Activated CD8-positive, alpha-beta T cell treated with anti-CD3 and anti-CD28 coated beads for 36 hours (primary cell): ENCODE measurements at regions of chr3 and their contacts with region 1.

Region 1: DNA sequence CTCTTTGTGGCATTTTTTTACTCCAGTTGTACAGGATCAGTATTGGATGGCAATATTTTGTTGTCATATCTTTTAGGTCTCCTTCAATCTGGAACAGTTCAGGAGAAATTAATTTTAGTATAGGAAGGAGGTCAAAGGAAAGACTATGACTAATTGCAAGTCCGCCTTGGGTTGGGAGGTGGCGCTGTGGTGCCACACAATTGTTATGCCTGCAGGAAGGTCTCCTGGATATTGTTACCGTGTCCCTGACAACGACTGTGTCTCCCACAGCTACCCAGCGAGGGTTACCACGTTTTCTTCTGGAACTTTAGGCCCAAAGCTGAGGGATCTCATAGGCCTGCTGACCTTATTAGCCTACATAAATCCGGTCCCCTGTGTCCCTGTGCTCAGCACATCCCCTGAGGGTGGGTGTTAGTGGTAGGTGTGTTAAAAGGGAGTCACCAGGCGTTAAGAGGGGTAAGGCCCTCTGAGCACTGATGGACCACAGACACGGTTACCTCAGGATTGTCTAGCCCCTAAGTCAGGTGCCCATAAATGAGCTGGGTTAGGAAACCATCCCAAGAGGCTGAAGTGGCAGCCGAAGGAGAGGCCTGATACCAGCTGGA is 31.5 kb downstream of the KCNAB1 start:
- DNase-seq: peak; percentile 79
- ATAC-seq: peak; percentile 66
- H3K4me3 Mint-ChIP-seq: no peak overlapping the region
- H3K27ac Mint-ChIP-seq: no peak overlapping the region
- H3K4me1 Mint-ChIP-seq: peaks cover 7% of the 10 kb centered on the region
- H3K27me3 Mint-ChIP-seq: no peaks in the 10 kb centered on the region
- CTCF ChIP-seq: peak; percentile 84

Region 2: GRCh38 chr3:156005736-156006135 is 146.2 kb before region 1 on chr3:
- CTCF ChIA-PET with region 1: no interaction called
- POLR2A ChIA-PET with region 1: no interaction called
- intact Hi-C with region 1: no loop called
- DNase-seq: no peak
- ATAC-seq: no peak
- H3K4me3 Mint-ChIP-seq: no peak overlapping the region
- H3K27ac Mint-ChIP-seq: no peak overlapping the region
- H3K4me1 Mint-ChIP-seq: no peaks in the 10 kb centered on the region
- H3K27me3 Mint-ChIP-seq: peaks cover 12% of the 10 kb centered on the region
- CTCF ChIP-seq: no peak

Region 3: DNA sequence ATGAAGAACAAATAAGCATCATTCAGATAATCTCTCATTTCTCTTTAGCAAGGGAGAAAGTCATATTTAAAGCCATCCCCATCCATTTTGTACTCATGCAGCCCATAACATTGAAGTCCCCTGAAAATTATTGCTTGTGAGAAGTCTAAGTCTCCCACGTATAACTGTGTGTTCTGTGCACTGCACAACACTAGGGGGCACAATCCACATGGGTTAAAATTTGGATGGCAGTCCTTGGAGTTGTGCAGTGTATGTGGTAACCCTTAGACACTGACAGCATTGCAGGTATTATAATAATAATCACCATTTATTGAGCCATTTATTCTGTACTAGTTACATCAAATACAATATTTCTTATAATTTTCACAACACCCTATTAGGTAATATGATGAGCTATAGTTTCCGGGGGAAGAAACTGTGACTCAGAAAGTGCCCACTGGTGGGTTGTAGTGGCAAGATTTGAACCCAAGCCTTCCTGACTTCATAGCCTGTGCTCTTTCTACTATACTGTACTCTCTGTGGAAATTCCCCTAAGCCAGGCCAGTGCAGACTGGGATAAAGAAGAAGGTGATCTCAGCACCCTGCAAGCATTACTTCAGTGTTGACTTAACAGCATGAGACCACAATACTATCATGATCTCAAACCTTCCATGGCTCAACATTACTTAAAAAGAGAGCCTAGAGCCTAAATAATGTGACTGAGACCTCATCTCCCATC is 15.8 kb before region 1 on chr3:
- CTCF ChIA-PET with region 1: interaction called, 15 read pairs
- POLR2A ChIA-PET with region 1: no interaction called
- intact Hi-C with region 1: no loop called
- DNase-seq: peak; percentile 26
- ATAC-seq: peak; percentile 84
- H3K4me3 Mint-ChIP-seq: no peak overlapping the region
- H3K27ac Mint-ChIP-seq: no peak overlapping the region
- H3K4me1 Mint-ChIP-seq: peaks cover 6% of the 10 kb centered on the region
- H3K27me3 Mint-ChIP-seq: peaks cover 34% of the 10 kb centered on the region
- CTCF ChIP-seq: peak; percentile 35

Region 4: DNA sequence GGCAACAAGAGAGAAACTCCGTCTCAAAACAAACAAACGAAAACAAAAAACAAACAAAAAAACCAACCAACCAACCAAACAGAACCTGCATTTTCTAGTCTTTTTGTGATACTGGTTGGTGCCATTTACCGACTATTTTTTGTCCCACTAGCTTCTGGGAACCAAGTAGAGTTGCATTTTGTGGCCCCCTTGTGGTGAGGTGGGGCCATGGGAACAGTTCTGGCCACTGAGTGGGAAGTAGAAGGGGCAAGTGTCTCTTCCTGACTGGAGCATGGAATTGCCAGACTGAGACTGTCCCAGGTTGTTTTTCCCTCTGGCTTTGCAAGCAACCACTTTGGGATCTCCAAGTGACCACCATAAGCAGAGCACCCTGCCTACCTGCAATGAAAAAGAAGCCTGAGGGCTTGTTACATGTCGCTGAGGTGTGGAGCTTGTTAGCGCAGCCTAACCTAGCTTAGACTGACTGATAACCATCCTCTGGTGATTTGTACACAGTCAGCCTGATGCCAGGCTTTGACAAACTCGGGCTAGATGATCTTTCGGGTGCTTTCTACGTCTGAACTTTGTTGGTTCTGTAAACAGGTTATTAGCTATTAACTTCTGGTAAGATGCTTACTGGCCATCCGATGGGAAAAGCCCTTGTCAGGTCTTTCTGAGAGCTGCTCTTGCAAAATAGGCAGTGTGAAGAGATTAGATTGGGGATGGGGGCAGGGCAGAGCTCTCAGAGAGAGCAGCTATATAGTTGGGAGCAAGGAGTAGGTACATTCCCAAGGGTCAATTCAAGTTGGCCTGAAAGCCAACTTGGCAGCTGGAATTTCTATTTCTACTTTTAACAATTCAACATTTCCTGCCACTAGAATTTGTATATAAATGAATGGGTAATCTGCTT is 230.8 kb after region 1 on chr3:
- CTCF ChIA-PET with region 1: interaction called, 42 read pairs
- POLR2A ChIA-PET with region 1: no interaction called
- intact Hi-C with region 1: loop called (anchors 5 kb)
- DNase-seq: peak; percentile 34
- ATAC-seq: no peak
- H3K4me3 Mint-ChIP-seq: no peak overlapping the region
- H3K27ac Mint-ChIP-seq: no peak overlapping the region
- H3K4me1 Mint-ChIP-seq: no peaks in the 10 kb centered on the region
- H3K27me3 Mint-ChIP-seq: no peaks in the 10 kb centered on the region
- CTCF ChIP-seq: peak; percentile 58

Region 5: GRCh38 chr3:156449712-156450574 is 298.0 kb after region 1 on chr3:
- CTCF ChIA-PET with region 1: interaction called, 18 read pairs
- POLR2A ChIA-PET with region 1: no interaction called
- intact Hi-C with region 1: no loop called
- DNase-seq: peak; percentile 8
- ATAC-seq: no peak
- H3K4me3 Mint-ChIP-seq: no peak overlapping the region
- H3K27ac Mint-ChIP-seq: no peak overlapping the region
- H3K4me1 Mint-ChIP-seq: no peaks in the 10 kb centered on the region
- H3K27me3 Mint-ChIP-seq: peaks cover 3% of the 10 kb centered on the region
- CTCF ChIP-seq: peak; percentile 63

Region 6: DNA sequence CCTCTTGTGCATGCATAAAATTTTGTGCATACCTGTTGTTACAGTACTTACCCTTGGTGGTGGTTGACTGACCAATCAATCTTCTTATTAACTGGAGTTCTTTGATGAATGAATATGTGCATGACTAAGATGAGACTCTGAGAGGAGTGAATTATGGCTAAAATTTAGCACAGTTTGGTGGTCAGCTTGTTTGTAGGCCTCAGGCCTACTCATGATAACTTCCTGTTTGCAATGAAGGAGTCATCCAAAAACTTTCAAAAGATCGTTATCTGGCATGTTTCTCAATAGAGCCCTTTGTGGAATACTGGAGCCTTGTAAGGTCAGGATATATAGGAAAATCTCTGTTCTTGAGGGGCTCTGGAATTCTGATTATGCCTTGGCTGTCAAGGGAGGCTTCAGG is 740.8 kb after region 1 on chr3:
- CTCF ChIA-PET with region 1: no interaction called
- POLR2A ChIA-PET with region 1: no interaction called
- intact Hi-C with region 1: no loop called
- DNase-seq: no peak
- ATAC-seq: no peak
- H3K4me3 Mint-ChIP-seq: no peak overlapping the region
- H3K27ac Mint-ChIP-seq: no peak overlapping the region
- H3K4me1 Mint-ChIP-seq: no peaks in the 10 kb centered on the region
- H3K27me3 Mint-ChIP-seq: no peaks in the 10 kb centered on the region
- CTCF ChIP-seq: no peak